MCF 10A (cell line): ENCODE measurements at regions of chr10 and their contacts with region 1.

Region 1: DNA sequence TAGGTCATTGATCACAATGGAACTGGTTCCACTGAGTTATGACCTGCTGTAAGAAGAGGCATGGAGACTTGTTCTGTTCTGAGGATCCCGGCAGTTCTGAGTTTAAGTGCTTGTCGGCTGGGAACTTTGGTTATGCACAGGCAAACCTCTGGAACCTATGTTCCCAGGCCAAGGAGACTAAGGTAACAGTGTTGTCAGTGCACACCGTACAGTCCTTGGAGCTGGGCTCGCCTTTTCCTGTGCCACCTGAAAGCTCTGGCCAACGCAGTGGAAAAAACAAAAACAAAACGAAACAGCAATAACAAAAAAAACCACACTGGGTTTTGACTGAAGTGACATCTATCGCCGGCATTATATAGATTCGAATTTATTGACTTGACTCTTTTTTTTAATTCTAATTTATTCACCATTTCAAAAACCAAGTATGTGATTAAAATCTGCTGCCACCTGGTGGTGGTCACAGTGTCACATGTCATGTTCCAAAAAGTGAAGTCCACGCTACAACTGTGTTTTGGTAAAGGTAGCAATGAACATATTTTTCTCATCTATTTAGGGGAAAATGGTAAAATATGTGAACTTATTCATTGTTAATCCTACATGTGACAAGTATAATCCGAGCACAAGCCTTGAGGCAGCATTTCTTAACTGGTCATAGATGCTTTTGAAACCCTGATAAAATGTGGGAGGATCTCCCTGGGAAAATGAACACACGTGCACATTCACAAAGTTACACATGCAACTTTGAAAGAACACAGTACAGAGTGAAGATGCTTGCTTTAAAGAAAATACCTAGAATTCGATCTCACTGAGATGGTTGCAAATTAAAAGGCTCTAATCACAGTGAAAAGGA is 113.8 kb upstream of the PPP2R2D start:
- DNase-seq: peak; percentile 55
- H3K4me3 Mint-ChIP-seq: no peak overlapping the region
- H3K27ac Mint-ChIP-seq: no peak overlapping the region
- H3K4me1 Mint-ChIP-seq: no peaks in the 10 kb centered on the region
- H3K27me3 Mint-ChIP-seq: no peaks in the 10 kb centered on the region
- CTCF ChIP-seq: peak; percentile 62

Region 2: DNA sequence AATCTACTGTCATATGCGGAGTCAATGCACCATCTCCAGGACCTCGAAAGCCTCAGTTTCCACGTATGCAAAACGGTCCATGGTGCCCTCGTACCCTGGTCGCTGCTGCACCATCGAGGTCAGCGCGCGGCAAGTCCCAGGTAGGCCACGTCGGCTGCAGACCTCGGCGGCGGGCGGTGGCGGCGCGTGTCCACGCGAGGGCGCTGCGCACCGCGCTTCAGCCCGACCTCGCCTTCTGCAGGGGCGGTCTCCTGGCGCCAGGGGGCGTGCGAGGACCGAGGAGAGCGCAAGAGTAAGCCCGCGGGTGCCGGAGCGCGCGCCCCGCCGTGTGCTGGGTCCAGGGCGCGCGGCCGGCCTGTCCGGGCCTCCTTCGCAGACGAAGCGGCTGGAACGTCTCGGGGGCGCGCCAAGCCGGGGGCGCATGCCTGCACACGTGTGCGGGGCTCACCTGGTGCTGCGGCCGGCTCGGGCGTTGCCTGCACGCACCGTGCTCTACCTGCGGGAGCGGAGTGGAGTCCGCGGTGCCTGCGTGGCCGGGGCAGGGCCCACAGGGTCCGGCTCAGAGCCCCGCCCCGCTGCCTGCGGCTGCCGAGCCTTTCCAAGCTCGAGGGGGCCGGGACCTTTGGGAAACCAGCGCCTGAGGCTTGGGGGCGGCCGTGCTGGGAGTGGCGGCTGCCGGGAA is 1596.8 kb before region 1 on chr10:
- CTCF ChIA-PET with region 1: no interaction called
- POLR2A ChIA-PET with region 1: no interaction called
- intact Hi-C with region 1: loop called (anchors 2 kb)
- DNase-seq: peak; percentile 80
- H3K4me3 Mint-ChIP-seq: peak overlapping the region; percentile 10
- H3K27ac Mint-ChIP-seq: no peak overlapping the region
- H3K4me1 Mint-ChIP-seq: peaks cover 6% of the 10 kb centered on the region
- H3K27me3 Mint-ChIP-seq: no peaks in the 10 kb centered on the region
- CTCF ChIP-seq: peak; percentile 100

Region 3: DNA sequence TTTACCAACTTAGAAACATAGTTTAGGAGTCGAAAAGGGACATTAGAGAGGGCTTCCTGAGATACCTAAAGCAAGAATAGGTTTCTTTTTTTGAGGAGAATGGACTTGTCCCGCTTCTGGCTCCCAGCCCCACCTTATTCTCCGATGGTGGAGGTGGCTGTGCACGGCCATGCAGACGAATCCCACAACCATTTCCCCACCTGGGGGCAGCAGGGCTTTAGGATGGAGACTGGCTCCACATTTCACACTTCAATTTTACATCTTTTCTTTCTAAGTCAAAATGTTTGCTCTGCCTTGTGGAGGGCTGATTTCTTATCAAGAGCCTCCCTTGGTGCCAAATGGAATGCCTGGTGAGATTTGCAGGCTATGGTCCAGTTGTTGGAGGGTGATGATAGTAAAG is 1532.3 kb before region 1 on chr10:
- CTCF ChIA-PET with region 1: interaction called, 13 read pairs
- POLR2A ChIA-PET with region 1: no interaction called
- intact Hi-C with region 1: no loop called
- DNase-seq: peak; percentile 6
- H3K4me3 Mint-ChIP-seq: no peak overlapping the region
- H3K27ac Mint-ChIP-seq: no peak overlapping the region
- H3K4me1 Mint-ChIP-seq: no peaks in the 10 kb centered on the region
- H3K27me3 Mint-ChIP-seq: no peaks in the 10 kb centered on the region
- CTCF ChIP-seq: peak; percentile 33

Region 4: DNA sequence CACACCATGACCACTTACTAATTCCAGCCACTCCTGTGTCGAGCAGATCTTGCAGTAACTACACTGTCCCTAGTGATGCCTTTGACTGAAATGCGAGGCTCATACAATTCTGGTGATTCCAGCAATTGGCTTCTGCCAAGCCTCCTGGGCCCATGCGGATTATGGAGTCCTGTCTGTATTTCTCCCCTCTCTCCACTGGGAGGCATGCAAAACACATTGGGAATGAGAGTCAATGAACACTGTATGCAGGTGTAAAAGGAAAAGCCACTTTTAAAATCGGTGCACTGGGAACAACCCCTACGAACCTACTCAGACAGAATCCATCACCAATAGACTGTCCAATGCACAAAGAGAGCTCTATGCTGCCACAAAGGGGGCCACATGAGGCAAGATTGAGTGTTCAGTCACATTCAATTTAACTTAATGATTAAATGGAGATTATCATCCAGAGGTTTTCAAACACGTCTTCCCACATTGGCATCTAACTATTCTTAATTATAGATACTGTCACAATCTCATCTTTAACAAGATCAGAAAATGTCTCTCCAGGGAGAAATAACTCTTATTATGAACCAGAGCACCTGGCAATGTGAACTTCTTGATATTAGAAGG is 1100.2 kb before region 1 on chr10:
- CTCF ChIA-PET with region 1: interaction called, 4 read pairs
- POLR2A ChIA-PET with region 1: no interaction called
- intact Hi-C with region 1: loop called (anchors 1 kb)
- DNase-seq: peak; percentile 21
- H3K4me3 Mint-ChIP-seq: no peak overlapping the region
- H3K27ac Mint-ChIP-seq: no peak overlapping the region
- H3K4me1 Mint-ChIP-seq: no peaks in the 10 kb centered on the region
- H3K27me3 Mint-ChIP-seq: no peaks in the 10 kb centered on the region
- CTCF ChIP-seq: peak; percentile 38

Region 5: DNA sequence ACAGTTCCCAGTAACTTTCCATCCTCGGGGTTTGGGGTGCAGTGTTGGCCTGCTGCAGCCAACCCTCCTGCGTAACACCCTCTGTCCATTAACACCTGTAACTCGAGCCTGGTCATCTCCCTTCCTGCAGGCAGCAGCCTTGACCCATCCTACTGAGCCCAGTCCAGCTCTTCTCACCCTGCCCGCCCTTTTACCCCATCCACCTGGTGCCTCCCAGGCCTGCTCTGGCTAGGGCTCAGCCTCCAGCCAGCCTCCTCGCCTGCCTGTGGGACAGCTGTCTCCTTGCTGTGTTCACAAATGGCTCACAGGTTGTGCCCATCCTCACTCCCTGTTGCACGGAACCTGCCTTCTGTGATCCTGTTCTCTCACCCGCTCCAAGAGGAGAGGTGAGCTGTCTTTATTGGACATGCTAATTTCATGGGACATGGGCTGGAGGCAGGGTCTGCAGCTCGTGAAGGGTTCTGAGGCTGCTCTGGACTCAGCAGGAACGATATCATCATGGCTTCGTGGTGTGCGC is 198.2 kb before region 1 on chr10:
- CTCF ChIA-PET with region 1: no interaction called
- POLR2A ChIA-PET with region 1: no interaction called
- intact Hi-C with region 1: no loop called
- DNase-seq: no peak
- H3K4me3 Mint-ChIP-seq: no peak overlapping the region
- H3K27ac Mint-ChIP-seq: no peak overlapping the region
- H3K4me1 Mint-ChIP-seq: no peaks in the 10 kb centered on the region
- H3K27me3 Mint-ChIP-seq: no peaks in the 10 kb centered on the region
- CTCF ChIP-seq: no peak